BJ (cell line): ENCODE measurements at regions of chr7 and their contacts with region 1.

Region 1: DNA sequence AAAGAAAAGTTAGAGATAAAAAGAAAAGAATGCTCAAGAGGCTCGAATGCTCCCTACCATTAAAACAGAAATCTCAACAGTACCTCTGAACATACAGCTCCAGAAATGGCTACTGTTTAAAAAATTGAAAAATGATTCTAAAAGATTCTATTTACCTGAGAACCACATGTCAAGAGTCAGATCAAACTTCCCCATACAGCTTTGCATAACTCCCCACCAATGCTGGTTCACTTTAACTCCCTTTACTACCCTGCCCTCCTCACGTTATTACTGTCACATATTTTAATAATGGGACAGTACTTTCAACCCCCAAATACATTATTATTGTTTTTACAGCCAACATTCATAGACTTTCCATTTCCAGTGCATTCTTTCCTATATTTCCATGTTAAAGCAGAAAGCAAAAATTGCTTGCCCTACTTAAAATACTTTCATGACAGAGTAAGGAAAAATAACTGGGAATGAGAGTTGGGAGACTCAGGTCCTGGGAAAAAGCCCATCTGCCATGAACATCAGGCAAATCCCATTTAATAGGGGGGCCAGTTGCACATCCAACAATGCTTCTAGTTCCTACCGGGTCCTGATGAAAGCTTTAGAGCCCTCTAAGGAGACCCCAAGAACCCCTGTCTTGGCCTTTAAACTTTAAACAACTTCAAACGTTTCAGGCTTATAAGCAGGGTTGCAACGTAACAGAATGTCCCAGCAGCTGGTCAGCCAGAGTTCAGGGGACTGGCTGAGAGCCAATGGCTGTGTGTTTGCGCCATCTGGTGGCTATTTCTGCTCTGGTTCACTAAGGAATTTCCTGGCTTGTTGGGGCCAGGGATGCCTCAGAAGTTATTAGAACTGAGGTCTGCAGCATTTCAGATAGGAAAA is 247.4 kb downstream of the ELMO1 start:
- DNase-seq: no peak
- H3K4me3 ChIP-seq: no peak overlapping the region
- H3K27me3 ChIP-seq: no peaks in the 10 kb centered on the region
- CTCF ChIP-seq: peak; percentile 83

Region 2: DNA sequence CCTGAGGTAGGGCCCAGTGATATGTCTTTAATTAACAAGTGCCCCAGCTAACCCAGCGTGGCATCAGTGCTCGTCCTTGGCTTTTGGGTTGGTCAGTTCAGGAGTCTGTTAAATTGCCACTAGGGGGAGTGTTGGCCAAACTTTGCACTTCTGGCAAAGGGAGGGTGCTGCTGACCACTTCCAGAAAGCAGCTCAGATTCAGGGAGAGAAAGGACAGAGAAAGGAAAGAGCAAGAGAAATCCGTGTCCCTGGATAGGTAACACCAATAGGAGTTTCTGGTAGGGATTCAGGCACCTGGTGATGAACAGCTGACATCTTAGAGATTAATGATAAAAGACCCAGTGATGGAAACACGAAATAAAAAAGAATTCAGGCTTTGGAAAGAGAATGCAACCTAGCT is 233.9 kb before region 1 on chr7:
- CTCF ChIA-PET with region 1: interaction called, 92 read pairs
- POLR2A ChIA-PET with region 1: no interaction called
- DNase-seq: no peak
- H3K4me3 ChIP-seq: no peak overlapping the region
- H3K27me3 ChIP-seq: no peaks in the 10 kb centered on the region
- CTCF ChIP-seq: peak; percentile 83

Region 3: DNA sequence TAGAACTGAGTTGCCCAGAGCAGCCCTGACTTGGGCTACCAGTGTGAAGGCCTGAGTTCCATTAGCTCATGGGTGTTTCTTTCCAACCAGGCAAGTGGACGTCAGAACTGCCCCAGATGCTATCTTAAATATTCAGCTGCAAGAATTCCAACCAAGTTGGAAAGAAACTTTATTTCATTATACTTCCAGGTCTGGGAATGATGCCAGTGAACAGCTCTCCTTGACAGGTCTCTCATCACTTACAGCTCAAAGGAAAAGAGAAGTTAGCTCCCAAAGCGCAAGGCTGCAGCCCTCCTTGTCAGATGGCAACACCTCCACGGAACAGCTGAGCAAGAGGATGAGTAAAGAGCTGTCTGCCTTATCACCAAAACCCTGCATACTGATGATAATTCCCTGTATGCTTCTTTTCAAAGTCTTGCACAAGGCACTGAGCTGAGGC is 221.4 kb before region 1 on chr7:
- CTCF ChIA-PET with region 1: interaction called, 12 read pairs
- POLR2A ChIA-PET with region 1: no interaction called
- DNase-seq: no peak
- H3K4me3 ChIP-seq: no peak overlapping the region
- H3K27me3 ChIP-seq: no peaks in the 10 kb centered on the region
- CTCF ChIP-seq: no peak

Region 4: DNA sequence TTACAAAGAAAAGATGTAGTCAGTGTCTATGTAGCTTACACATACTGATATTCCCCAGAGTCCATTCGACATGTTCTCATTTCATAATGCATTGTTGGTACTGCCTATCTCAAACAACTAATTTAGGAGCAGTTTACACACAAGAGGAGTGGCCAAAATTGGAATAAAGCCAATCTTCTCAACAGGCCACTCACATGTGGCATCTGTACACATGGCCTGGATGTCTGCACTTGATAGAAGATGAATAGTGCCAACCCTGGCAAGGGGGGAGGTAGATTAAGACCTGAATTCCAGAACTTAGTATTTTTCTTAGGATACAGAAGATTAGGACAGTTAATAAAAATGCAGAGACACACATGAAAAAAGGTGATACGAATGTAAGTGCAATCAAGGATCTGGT is 851.5 kb after region 1 on chr7:
- CTCF ChIA-PET with region 1: no interaction called
- POLR2A ChIA-PET with region 1: no interaction called
- DNase-seq: no peak
- H3K4me3 ChIP-seq: no peak overlapping the region
- H3K27me3 ChIP-seq: no peaks in the 10 kb centered on the region
- CTCF ChIP-seq: no peak